T-cell (primary cell): ENCODE measurements at regions of chr12 and their contacts with region 1.

Region 1: GRCh38 chr12:116765271-116765670 is 27.2 kb downstream of the RNFT2 start:
- DNase-seq: no peak
- ATAC-seq: no peak
- H3K4me3 ChIP-seq: no peak overlapping the region
- H3K4me3 Mint-ChIP-seq: no peak overlapping the region
- H3K27ac ChIP-seq: no peak overlapping the region
- H3K27ac Mint-ChIP-seq: no peak overlapping the region
- H3K4me1 ChIP-seq: no peaks in the 10 kb centered on the region
- H3K4me1 Mint-ChIP-seq: peaks cover 0 to 7% (median 0%) of the 10 kb centered on the region in 3 donors
- H3K27me3 ChIP-seq: no peaks in the 10 kb centered on the region
- H3K27me3 Mint-ChIP-seq: no peaks in the 10 kb centered on the region

Region 2: DNA sequence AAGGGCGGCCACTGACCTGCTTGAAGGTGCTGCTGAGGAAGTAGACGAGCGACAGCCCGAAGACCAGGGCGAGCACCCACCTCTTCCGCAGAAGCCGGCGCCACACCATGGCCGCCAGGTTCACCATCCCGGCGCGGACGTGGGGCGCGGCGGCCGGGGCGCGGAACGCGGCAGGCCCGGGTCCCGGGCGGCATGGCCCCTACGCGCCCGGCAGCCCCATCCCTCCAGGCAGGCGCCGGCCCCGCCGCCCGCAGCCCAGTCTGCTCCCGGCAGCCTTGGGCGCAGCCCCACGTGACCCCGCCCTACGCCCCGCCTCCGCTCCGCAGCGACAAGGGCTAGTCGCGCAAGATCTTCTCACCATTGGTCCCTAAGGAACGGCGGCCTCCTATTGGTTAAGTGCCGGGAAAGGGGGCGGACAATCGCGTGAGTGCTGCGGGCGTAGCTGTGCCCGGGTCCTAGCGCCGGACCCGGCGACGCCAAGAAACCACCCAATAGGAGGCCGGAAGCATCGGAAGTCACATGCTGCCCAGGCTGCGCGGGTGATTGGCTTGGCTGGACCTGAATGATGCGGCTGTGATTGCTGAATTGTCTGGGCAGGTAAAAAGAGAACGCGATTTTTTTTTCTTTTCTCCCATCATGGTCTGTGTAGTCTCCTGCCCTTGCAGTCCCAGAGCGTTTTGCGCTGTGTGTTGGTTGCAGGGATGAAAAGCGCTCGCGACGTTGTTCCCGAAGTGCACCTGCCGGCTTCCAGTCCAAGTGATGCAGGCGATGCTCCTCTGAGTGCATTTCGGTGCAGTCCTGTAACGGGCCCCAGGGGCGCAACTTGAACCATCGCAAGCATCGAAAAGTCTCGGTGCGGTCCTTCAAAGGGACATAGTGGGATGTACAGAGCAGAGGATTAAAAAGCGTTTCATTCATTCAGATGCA is 27.2 kb before region 1 on chr12 and contains the starts of genes RNFT2 and SPRING1:
- CTCF ChIA-PET with region 1: no interaction called
- POLR2A ChIA-PET with region 1: interaction called in 1 of 2 experiments, 11 read pairs
- DNase-seq: peak; percentile 96 to 100 (median 99)
- ATAC-seq: peak; percentile 95 to 97 (median 96)
- H3K4me3 ChIP-seq: peak within 1 kb of the TSS; percentile 64 to 85
- H3K4me3 Mint-ChIP-seq: peak within 1 kb of the TSS; percentile 94 to 97 (median 97)
- H3K27ac ChIP-seq: peak within 1 kb of the TSS; percentile 2
- H3K27ac Mint-ChIP-seq: peak within 1 kb of the TSS; percentile 74 to 87
- H3K4me1 ChIP-seq: peaks cover 13 to 21% of the 10 kb centered on the region in 2 experiments
- H3K4me1 Mint-ChIP-seq: peaks cover 33 to 42% (median 37%) of the 10 kb centered on the region in 3 donors
- H3K27me3 ChIP-seq: no peaks in the 10 kb centered on the region
- H3K27me3 Mint-ChIP-seq: no peaks in the 10 kb centered on the region
- total RNA-seq, gene RNFT2: 5.1 to 7.6 (median 6.9) TPM
- total RNA-seq, gene SPRING1: 15.0 to 31.7 (median 30.9) TPM

Region 3: GRCh38 chr12:116867523-116867922 is 102.3 kb after region 1 on chr12:
- CTCF ChIA-PET with region 1: no interaction called
- POLR2A ChIA-PET with region 1: no interaction called
- DNase-seq: no peak
- ATAC-seq: no peak
- H3K4me3 ChIP-seq: no peak overlapping the region
- H3K4me3 Mint-ChIP-seq: no peak overlapping the region
- H3K27ac ChIP-seq: no peak overlapping the region
- H3K27ac Mint-ChIP-seq: no peak overlapping the region
- H3K4me1 ChIP-seq: no peaks in the 10 kb centered on the region
- H3K4me1 Mint-ChIP-seq: no peaks in the 10 kb centered on the region
- H3K27me3 ChIP-seq: peaks cover 0 to 18% of the 10 kb centered on the region in 2 experiments
- H3K27me3 Mint-ChIP-seq: peaks cover 3 to 16% of the 10 kb centered on the region in 2 donors

Region 4: DNA sequence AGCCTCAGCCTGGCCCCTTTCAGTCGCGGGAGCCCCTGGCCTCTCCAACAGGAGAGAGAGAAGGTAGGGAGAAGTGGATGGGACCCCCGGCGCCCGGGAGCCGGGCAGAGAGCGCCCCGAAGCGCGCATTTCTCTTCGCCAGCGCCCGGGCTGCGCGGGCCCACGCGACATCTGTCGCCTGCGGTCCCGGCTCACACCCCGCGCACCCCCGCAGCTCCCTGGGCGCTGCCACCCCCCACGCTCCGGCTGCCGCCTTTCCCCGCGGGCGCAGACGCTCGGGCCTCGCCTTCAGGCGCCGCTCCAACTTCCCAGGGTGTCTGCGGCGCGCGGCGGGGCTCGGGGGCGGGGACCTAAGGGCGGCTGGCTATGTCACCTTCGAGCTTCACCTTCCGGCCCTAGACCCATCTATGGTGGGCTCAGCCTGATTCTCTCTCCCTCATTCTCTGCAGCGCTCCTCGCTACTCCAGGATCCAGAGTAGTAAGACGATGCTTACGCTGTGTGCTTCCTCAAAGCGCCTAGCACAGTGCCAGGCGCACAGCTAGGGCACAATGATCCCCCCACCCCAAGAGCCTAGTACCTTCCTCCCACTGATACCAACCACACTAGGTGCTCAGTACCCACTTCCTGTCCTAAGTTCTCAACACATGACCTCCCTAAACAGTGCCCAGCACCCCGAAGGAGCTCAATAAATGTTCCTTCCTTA is 114.4 kb after region 1 on chr12:
- CTCF ChIA-PET with region 1: no interaction called
- POLR2A ChIA-PET with region 1: no interaction called
- DNase-seq: no peak
- ATAC-seq: no peak
- H3K4me3 ChIP-seq: peak overlapping the region in 1 of 2 donors; percentile 60
- H3K4me3 Mint-ChIP-seq: peak overlapping the region; percentile 74 to 91 (median 75)
- H3K27ac ChIP-seq: no peak overlapping the region
- H3K27ac Mint-ChIP-seq: peak overlapping the region in 1 of 2 donors; percentile 32
- H3K4me1 ChIP-seq: peaks cover 8 to 33% of the 10 kb centered on the region in 2 experiments
- H3K4me1 Mint-ChIP-seq: peaks cover 31 to 38% (median 34%) of the 10 kb centered on the region in 3 donors
- H3K27me3 ChIP-seq: peaks cover 11 to 83% of the 10 kb centered on the region in 2 experiments
- H3K27me3 Mint-ChIP-seq: peaks cover 60 to 79% of the 10 kb centered on the region in 2 donors